ENCODE measurements at regions of chr3 and their contacts with region 1.

Region 1: DNA sequence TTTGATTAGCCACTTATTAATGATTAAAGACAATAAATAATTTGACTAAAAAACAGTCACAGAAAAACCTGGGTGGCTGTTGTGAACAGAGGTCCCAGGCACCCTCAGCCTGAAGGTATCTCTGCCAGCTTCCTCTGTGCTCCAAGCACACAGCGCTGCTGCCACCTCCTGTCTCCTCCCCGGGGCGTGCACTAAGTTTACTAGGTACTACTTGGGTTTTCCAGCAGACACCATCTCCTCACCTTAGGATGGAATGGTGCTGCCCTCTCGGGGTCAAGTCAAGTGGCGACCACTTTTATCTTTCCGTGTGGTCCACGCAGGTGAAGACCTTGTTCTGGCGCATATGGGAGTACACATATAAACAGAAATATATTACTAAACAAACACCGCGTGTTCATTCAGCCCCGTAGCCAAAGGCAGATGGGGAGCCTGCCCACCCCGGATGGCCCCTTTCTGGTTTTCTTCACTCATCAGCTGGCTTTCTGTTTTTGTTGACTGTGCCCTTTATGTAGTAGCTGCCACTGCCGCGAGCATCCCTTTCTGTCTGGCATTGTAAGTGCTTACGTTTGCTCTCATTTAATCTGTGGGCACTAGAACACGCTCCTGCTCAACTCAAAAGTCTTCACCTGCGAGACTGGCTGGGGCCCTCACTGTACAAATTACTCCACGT is 128.0 kb downstream of the LRIG1 start:
- DNase-seq: peak; percentile 77
- ATAC-seq: peak; percentile 98
- H3K4me3 Mint-ChIP-seq: no peak overlapping the region
- H3K27ac Mint-ChIP-seq: no peak overlapping the region
- H3K4me1 Mint-ChIP-seq: no peaks in the 10 kb centered on the region
- H3K27me3 Mint-ChIP-seq: no peaks in the 10 kb centered on the region
- CTCF ChIP-seq: no peak

Region 2: DNA sequence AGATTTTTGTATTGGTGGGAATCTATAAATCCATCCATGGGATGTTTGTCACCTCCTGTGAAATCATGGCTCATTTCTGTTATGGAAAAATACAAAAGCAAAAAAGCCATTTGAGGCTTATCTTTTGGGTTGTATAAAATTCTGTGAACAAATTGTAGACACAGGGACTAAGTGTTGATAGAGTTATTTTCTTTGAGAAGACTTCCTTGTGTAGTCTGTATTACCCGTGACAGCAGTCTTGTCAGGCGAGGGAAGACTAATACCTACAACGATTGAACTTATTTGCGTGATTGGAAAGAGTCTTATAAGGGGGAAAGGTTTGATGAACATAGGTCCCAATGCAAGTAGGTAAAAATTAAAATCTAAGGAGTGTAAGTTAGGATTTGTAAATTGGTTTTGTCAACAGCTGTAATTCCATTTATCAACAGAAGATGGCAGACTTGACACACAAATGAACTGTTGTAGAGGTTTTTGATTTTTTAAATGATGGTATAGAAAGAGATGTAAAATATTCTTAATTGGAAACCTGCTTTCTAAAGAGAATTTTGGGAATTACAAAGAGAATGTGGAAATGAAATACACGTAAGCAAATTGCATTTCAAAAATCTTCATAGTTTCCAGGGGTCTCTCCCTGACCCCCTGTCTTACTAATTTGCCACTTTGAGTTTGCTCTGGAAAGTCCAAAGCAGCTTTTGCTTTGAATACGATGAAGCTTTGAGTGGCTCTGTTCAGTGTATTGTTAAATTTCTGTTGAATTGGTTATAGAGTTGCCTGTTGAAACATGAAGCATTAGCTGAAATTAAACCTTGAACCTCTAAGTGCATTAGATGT is 118.8 kb before region 1 on chr3:
- CTCF ChIA-PET with region 1: interaction called, 39 read pairs
- POLR2A ChIA-PET with region 1: no interaction called
- DNase-seq: no peak
- ATAC-seq: no peak
- H3K4me3 Mint-ChIP-seq: no peak overlapping the region
- H3K27ac Mint-ChIP-seq: no peak overlapping the region
- H3K4me1 Mint-ChIP-seq: no peaks in the 10 kb centered on the region
- H3K27me3 Mint-ChIP-seq: no peaks in the 10 kb centered on the region
- CTCF ChIP-seq: peak; percentile 78

Region 3: GRCh38 chr3:66276705-66277274 is 96.0 kb before region 1 on chr3:
- CTCF ChIA-PET with region 1: interaction called, 54 read pairs
- POLR2A ChIA-PET with region 1: interaction called, 3 read pairs
- DNase-seq: peak; percentile 60
- ATAC-seq: no peak
- H3K4me3 Mint-ChIP-seq: no peak overlapping the region
- H3K27ac Mint-ChIP-seq: no peak overlapping the region
- H3K4me1 Mint-ChIP-seq: peaks cover 21% of the 10 kb centered on the region
- H3K27me3 Mint-ChIP-seq: no peaks in the 10 kb centered on the region
- CTCF ChIP-seq: peak; percentile 53; the same call in 1 of the 2 replicates

Measured in WTC11 (cell line).